ENCODE measurements at regions of chr7 and their contacts with region 1.

Region 1: GRCh38 chr7:95723592-95724180 is 48.7 kb upstream of the DYNC1I1 start:
- DNase-seq: peak; percentile 51 to 65
- ATAC-seq: peak; percentile 86 to 92
- H3K4me3 ChIP-seq: no peak overlapping the region
- H3K27ac ChIP-seq: no peak overlapping the region
- H3K4me1 ChIP-seq: no peaks in the 10 kb centered on the region
- CTCF ChIP-seq: peak; percentile 66
- EP300 ChIP-seq: no peak
- POLR2A ChIP-seq: no peak
- RAD21 ChIP-seq: peak; percentile 76 to 84

Region 2: DNA sequence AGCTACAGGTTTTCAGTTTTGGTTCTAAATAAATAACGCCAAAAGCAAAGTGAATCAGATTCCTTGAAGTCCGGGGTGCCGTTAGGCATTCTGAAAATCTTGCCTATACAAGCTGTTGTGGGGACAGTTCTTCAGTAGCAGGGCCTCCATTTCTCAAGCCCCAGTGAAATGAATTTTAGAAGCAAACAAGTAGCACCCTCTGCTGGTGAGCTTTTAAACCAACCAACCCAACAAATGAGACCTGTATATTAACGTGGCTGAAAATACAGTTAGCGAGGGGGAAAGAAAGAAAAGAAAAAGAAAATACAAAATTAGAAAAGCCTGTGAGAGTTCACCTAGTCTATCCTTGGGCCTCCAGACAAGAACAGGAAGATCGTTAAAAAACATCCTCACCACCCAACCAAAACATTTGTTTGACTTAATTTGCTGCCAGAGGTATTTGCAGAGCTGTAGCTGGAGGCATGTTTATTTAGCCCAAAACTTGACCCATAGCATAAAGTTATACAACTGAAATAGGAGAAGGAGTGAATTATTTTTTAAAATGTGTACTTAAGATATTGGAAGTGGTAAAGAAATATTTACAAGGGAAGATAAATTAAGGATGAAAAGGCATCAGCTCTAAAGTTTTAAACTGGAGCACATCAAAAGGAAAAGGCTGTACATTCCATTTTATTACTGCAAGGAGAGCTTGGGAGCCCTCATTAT is 147.5 kb after region 1 on chr7:
- CTCF ChIA-PET with region 1: interaction called, 171 read pairs
- POLR2A ChIA-PET with region 1: interaction called, 4 read pairs
- DNase-seq: peak; percentile 36 to 55
- ATAC-seq: peak; percentile 73 to 90; a peak in 5 of 6 replicates
- H3K4me3 ChIP-seq: no peak overlapping the region
- H3K27ac ChIP-seq: no peak overlapping the region
- H3K4me1 ChIP-seq: no peaks in the 10 kb centered on the region
- CTCF ChIP-seq: peak; percentile 77
- EP300 ChIP-seq: no peak
- POLR2A ChIP-seq: no peak
- RAD21 ChIP-seq: peak; percentile 71 to 78